ENCODE measurements at regions of chr1 and their contacts with region 1.

Region 1: GRCh38 chr1:43008115-43009060 is 49.7 kb upstream of the SLC2A1 start:
- DNase-seq: peak; percentile 87 to 99
- H3K4me3 ChIP-seq: peak overlapping the region in 3 of 4 experiments; percentile 4 to 45 (median 7); a peak in 5 of 8 replicates
- H3K27ac ChIP-seq: peak overlapping the region; percentile 96
- H3K4me1 ChIP-seq: peaks cover 21 to 41% (median 28%) of the 10 kb centered on the region in 4 experiments
- H3K27me3 ChIP-seq: no peaks in the 10 kb centered on the region
- CTCF ChIP-seq: peak; percentile 6 to 36 (median 6); a peak in 3 of 4 replicates
- EP300 ChIP-seq: peak in 1 of 2 experiments; percentile 95; a peak in 2 of 3 replicates
- POLR2A ChIP-seq: no peak; a peak in 2 of 3 replicates
- RAD21 ChIP-seq: peak; percentile 23 to 29

Region 2: DNA sequence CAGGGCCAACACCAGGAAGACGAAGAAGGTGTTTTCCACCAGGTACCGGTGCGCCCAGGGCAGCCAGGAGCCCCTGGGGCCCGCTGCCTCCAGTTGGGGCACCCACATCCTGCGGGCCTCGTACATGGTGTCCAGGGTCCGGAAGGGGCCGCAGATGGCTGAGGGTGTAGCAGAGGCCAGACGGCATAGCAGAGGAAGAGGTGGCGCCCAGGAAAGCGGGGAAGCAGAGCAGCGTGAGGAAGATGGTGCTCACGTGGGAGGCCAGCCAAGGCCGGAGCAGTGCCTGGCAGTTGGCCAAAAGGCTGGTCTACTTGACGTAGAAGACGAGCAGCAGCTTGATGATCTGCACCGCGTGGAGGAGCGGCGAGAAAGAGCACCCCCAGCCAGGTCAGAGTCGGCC is 121.6 kb before region 1 on chr1:
- CTCF ChIA-PET with region 1: no interaction called
- POLR2A ChIA-PET with region 1: no interaction called
- DNase-seq: no peak
- H3K4me3 ChIP-seq: no peak overlapping the region
- H3K27ac ChIP-seq: no peak overlapping the region
- H3K4me1 ChIP-seq: no peaks in the 10 kb centered on the region; a peak in 1 of 7 replicates
- H3K27me3 ChIP-seq: no peaks in the 10 kb centered on the region
- CTCF ChIP-seq: no peak
- EP300 ChIP-seq: no peak
- POLR2A ChIP-seq: no peak
- RAD21 ChIP-seq: no peak

Region 3: GRCh38 chr1:42924082-42924850 is 84.1 kb before region 1 on chr1:
- CTCF ChIA-PET with region 1: interaction called, 4 read pairs
- POLR2A ChIA-PET with region 1: interaction called, 13 read pairs
- DNase-seq: peak; percentile 84 to 98
- H3K4me3 ChIP-seq: peak overlapping the region; percentile 54 to 74 (median 60)
- H3K27ac ChIP-seq: peak overlapping the region; percentile 81; the same call in 1 of the 2 replicates
- H3K4me1 ChIP-seq: peaks cover 4 to 10% (median 7%) of the 10 kb centered on the region in 4 experiments; a peak in 6 of 7 replicates
- H3K27me3 ChIP-seq: no peaks in the 10 kb centered on the region
- CTCF ChIP-seq: peak in 2 of 3 experiments; percentile 2 to 33; a peak in 2 of 4 replicates
- EP300 ChIP-seq: no peak
- POLR2A ChIP-seq: peak; percentile 73 to 93
- RAD21 ChIP-seq: peak in 1 of 2 experiments; percentile 7; a peak in 1 of 4 replicates

Region 4: GRCh38 chr1:42958488-42959319 is 49.7 kb before region 1 on chr1 and contains the start of gene SLC2A1:
- CTCF ChIA-PET with region 1: interaction called, 3 read pairs
- POLR2A ChIA-PET with region 1: interaction called, 140 read pairs
- DNase-seq: peak; percentile 90 to 95
- H3K4me3 ChIP-seq: peak within 1 kb of the TSS; percentile 69 to 92 (median 91)
- H3K27ac ChIP-seq: peak within 1 kb of the TSS; percentile 87
- H3K4me1 ChIP-seq: peaks cover 17 to 49% (median 36%) of the 10 kb centered on the region in 4 experiments
- H3K27me3 ChIP-seq: no peaks in the 10 kb centered on the region
- CTCF ChIP-seq: peak in 1 of 3 experiments; percentile 2; a peak in 1 of 4 replicates
- EP300 ChIP-seq: no peak; a peak in 1 of 3 replicates
- POLR2A ChIP-seq: peak; percentile 95 to 97
- RAD21 ChIP-seq: no peak
- total RNA-seq, gene SLC2A1: 230 and 239 TPM in 2 replicates

Region 5: DNA sequence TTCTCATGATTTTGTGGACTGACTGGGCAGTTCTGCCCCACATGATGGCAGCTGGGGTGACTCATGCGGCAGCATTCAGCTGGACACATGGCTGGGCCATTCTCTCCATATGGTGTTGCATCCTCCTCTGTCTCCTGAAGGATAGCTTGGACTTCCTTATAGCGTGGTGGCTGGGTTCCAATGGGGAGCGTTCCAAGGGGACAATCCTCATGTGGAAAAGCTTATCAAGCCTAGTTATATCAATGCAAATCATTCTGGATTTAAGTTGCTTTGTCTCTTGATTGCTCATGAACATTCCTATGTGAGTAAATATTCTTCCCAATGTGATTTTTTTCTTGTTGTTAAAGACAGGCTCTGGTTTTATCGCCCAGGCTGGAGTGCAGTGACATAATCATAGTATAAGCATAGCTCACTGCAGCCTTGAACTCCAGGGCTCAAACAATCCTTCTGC is 36.5 kb before region 1 on chr1:
- CTCF ChIA-PET with region 1: no interaction called
- POLR2A ChIA-PET with region 1: interaction called, 95 read pairs
- DNase-seq: no peak
- H3K4me3 ChIP-seq: no peak overlapping the region
- H3K27ac ChIP-seq: no peak overlapping the region
- H3K4me1 ChIP-seq: peaks cover 3 to 8% (median 6%) of the 10 kb centered on the region in 4 experiments; a peak in 6 of 7 replicates
- H3K27me3 ChIP-seq: no peaks in the 10 kb centered on the region
- CTCF ChIP-seq: no peak
- EP300 ChIP-seq: no peak
- POLR2A ChIP-seq: no peak
- RAD21 ChIP-seq: no peak

Region 6: GRCh38 chr1:42996384-42996970 is 11.9 kb before region 1 on chr1:
- CTCF ChIA-PET with region 1: interaction called, 4 read pairs
- POLR2A ChIA-PET with region 1: interaction called, 15 read pairs
- DNase-seq: no peak
- H3K4me3 ChIP-seq: no peak overlapping the region
- H3K27ac ChIP-seq: no peak overlapping the region
- H3K4me1 ChIP-seq: peaks cover 0 to 4% (median 0%) of the 10 kb centered on the region in 4 experiments; a peak in 3 of 7 replicates
- H3K27me3 ChIP-seq: no peaks in the 10 kb centered on the region
- CTCF ChIP-seq: no peak
- EP300 ChIP-seq: no peak
- POLR2A ChIP-seq: no peak
- RAD21 ChIP-seq: no peak

Region 7: GRCh38 chr1:43021547-43022474 is 13.4 kb after region 1 on chr1:
- CTCF ChIA-PET with region 1: interaction called, 6 read pairs
- POLR2A ChIA-PET with region 1: interaction called, 13 read pairs
- DNase-seq: no peak
- H3K4me3 ChIP-seq: no peak overlapping the region
- H3K27ac ChIP-seq: no peak overlapping the region
- H3K4me1 ChIP-seq: no peaks in the 10 kb centered on the region
- H3K27me3 ChIP-seq: no peaks in the 10 kb centered on the region
- CTCF ChIP-seq: no peak
- EP300 ChIP-seq: no peak
- POLR2A ChIP-seq: no peak
- RAD21 ChIP-seq: no peak

Region 8: DNA sequence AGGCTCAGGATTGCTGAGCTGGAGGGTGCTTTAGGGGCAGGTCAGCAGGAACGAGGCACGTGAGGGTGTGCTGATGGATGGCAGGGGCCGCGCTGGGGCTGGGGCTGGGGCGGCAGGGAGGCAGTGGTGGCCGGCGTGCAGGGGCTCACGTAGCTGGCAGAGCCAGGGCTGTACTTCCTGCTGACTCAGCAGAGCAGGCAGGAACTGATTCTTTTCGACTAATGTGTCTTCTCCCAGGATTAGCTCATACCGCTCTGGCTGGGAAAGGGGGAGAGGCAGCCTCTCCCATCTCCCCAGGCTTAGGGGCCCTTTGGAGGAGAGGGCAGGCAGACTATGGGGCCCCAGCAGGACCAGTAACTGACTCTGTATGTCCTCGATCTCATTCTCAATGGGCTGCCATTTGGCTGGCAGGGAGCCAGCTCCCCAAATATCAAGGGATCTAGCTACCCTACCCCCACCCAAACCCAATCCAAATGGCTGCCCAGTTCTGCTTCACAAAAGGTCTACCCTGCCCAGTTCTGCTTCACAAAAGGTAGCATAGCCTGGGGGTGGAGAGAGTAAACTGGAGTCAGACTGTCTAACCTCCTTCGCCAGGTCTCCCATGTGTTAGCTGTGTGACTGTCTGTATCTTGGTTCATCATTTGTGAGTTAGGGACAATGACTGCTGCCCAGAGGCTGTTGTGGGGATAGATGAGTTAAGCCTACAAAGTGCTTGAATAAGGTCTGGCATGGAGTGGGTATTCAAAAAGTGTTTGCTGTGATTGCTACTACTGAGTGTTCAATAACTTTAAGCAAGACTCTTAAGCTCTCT is 50.4 kb after region 1 on chr1:
- CTCF ChIA-PET with region 1: no interaction called
- POLR2A ChIA-PET with region 1: interaction called, 11 read pairs
- DNase-seq: no peak
- H3K4me3 ChIP-seq: no peak overlapping the region
- H3K27ac ChIP-seq: no peak overlapping the region
- H3K4me1 ChIP-seq: peaks cover 0 to 11% (median 7%) of the 10 kb centered on the region in 4 experiments; a peak in 5 of 7 replicates
- H3K27me3 ChIP-seq: no peaks in the 10 kb centered on the region
- CTCF ChIP-seq: no peak
- EP300 ChIP-seq: no peak
- POLR2A ChIP-seq: no peak
- RAD21 ChIP-seq: no peak

Region 9: GRCh38 chr1:43107664-43108063 is 99.3 kb after region 1 on chr1:
- CTCF ChIA-PET with region 1: no interaction called
- POLR2A ChIA-PET with region 1: no interaction called
- DNase-seq: no peak
- H3K4me3 ChIP-seq: no peak overlapping the region
- H3K27ac ChIP-seq: no peak overlapping the region
- H3K4me1 ChIP-seq: no peaks in the 10 kb centered on the region
- H3K27me3 ChIP-seq: no peaks in the 10 kb centered on the region
- CTCF ChIP-seq: no peak
- EP300 ChIP-seq: no peak
- POLR2A ChIP-seq: no peak
- RAD21 ChIP-seq: no peak

Measured in H1 (cell line).